Activated B cell treated with CpG ODN at 0.5 μM for 24 hours (primary cell): ENCODE measurements at regions of chr6 and their contacts with region 1.

Region 1: DNA sequence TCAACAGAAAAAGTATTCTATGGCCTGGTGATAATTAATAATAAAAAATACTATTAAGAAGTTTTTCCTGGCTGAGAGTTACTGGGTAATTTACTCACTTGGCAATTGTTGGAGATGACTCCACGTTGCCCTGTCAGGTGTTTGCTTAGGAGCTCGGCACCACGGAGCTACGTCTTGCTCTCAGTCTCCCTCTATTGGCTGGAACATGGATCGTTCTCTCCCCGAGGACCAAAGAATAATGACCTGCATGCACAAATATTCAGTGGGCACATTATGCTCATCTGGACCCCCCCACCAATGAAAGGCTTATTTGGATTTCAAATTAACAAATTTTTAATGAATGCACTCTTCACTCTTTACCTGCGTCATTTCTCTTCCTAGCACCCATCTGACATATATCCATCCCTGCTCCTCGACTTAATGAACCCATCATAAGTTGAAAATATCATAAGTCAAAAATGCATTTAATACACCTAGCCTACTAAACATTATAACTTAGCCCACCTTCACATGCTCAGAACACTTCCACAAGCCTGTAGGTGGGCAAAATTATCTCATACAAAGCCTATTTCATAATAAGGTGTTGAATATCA is 71.0 kb upstream of the CD83 start:
- DNase-seq: no peak
- ATAC-seq: peak; percentile 89
- H3K4me3 Mint-ChIP-seq: no peak overlapping the region
- H3K27ac Mint-ChIP-seq: no peak overlapping the region
- H3K4me1 Mint-ChIP-seq: peaks cover 5% of the 10 kb centered on the region
- H3K27me3 Mint-ChIP-seq: peaks cover 3% of the 10 kb centered on the region
- CTCF ChIP-seq: peak; percentile 20

Region 2: GRCh38 chr6:14095437-14095836 is 48.9 kb after region 1 on chr6:
- CTCF ChIA-PET with region 1: interaction called, 5 read pairs
- POLR2A ChIA-PET with region 1: interaction called, 6 read pairs
- intact Hi-C with region 1: loop called (anchors 2 kb)
- DNase-seq: peak; percentile 72
- ATAC-seq: peak; percentile 73
- H3K4me3 Mint-ChIP-seq: peak overlapping the region; percentile 85
- H3K27ac Mint-ChIP-seq: peak overlapping the region; percentile 100
- H3K4me1 Mint-ChIP-seq: peaks cover 96% of the 10 kb centered on the region
- H3K27me3 Mint-ChIP-seq: no peaks in the 10 kb centered on the region
- CTCF ChIP-seq: no peak

Region 3: DNA sequence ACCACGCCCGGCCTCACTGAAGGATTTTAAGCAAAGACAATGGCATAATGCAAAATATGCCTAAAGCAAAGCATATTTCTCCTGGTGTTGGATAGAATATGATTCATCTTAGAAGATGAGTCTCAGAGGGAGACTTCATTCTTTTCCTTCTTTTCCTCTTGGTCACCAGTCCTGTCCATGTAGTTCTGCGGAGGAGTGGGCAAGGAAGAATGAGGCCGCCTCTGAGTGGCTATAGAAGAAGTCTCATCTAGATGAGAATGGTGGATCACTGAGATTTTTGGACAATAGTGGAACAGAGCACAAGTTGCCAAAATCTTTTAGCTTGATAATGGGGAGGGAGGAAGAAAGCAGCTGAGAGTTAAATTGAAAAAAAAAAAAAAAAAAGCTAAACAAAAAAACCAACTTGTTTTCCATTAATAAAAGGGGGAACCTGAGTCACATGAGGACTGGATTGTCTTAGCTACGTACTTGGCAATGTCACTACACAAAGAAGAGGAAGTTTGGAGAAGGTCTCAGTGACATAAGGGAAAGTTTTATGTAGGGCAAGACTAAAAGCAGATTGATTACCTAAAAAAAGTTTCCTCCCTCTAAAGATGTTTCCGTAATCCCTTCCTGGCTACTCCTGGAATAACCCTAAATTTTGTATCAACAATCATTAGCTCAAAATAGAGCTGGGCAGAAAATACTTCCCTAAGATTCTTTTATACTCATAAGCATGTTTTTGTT is 77.0 kb after region 1 on chr6:
- CTCF ChIA-PET with region 1: interaction called, 6 read pairs
- POLR2A ChIA-PET with region 1: interaction called, 12 read pairs
- intact Hi-C with region 1: loop called (anchors 1 kb)
- DNase-seq: no peak
- ATAC-seq: no peak
- H3K4me3 Mint-ChIP-seq: peak overlapping the region; percentile 95
- H3K27ac Mint-ChIP-seq: peak overlapping the region; percentile 94
- H3K4me1 Mint-ChIP-seq: peaks cover 84% of the 10 kb centered on the region
- H3K27me3 Mint-ChIP-seq: no peaks in the 10 kb centered on the region
- CTCF ChIP-seq: no peak

Region 4: DNA sequence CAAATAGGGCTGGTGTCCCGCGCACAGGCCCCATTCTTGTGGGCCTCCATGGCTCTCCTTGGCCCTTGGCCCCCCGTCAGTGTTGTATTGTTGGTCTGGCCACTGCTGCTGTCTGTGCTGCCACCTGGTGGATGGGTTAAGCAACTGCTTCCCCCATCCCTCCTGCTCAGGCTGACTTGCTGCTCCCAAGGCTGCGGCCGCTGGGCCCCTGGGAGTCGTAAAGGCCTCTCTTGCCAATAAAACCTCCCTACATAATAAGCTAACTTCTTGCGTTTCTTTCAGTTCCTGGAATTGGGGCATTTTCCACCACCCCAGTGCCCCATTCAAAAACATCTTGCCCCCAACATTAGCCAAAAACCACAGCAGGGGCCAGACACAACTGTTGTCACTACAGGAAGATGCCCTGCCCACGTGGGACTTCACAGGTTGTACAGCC is 98.1 kb after region 1 on chr6:
- CTCF ChIA-PET with region 1: interaction called, 13 read pairs
- POLR2A ChIA-PET with region 1: interaction called, 4 read pairs
- intact Hi-C with region 1: loop called (anchors 1 kb)
- DNase-seq: peak; percentile 63
- ATAC-seq: peak; percentile 84
- H3K4me3 Mint-ChIP-seq: peak overlapping the region; percentile 20
- H3K27ac Mint-ChIP-seq: peak overlapping the region; percentile 62
- H3K4me1 Mint-ChIP-seq: peaks cover 42% of the 10 kb centered on the region
- H3K27me3 Mint-ChIP-seq: no peaks in the 10 kb centered on the region
- CTCF ChIP-seq: peak; percentile 57